ENCODE measurements at regions of chr11 and their contacts with region 1.

Region 1: GRCh38 chr11:65711785-65712632 is at the start of gene KAT5:
- DNase-seq: peak; percentile 99
- ATAC-seq: peak; percentile 89
- H3K4me3 ChIP-seq: peak within 1 kb of the TSS; percentile 70
- H3K27ac ChIP-seq: peak within 1 kb of the TSS; percentile 91
- H3K4me1 ChIP-seq: peaks cover 11% of the 10 kb centered on the region
- H3K27me3 ChIP-seq: no peaks in the 10 kb centered on the region
- CTCF ChIP-seq: peak; percentile 95
- total RNA-seq, gene KAT5: 74.9 and 83.9 TPM in 2 replicates

Region 2: GRCh38 chr11:65773784-65774411 is 61.9 kb after region 1 on chr11:
- CTCF ChIA-PET with region 1: interaction called, 3 read pairs
- POLR2A ChIA-PET with region 1: no interaction called
- intact Hi-C with region 1: loop called (anchors 2 kb)
- DNase-seq: no peak
- ATAC-seq: no peak
- H3K4me3 ChIP-seq: no peak overlapping the region
- H3K27ac ChIP-seq: no peak overlapping the region
- H3K4me1 ChIP-seq: peaks cover 11% of the 10 kb centered on the region
- H3K27me3 ChIP-seq: no peaks in the 10 kb centered on the region
- CTCF ChIP-seq: no peak

Region 3: GRCh38 chr11:65779851-65780577 is 68.0 kb after region 1 on chr11:
- CTCF ChIA-PET with region 1: interaction called, 17 read pairs
- POLR2A ChIA-PET with region 1: interaction called, 5 read pairs
- intact Hi-C with region 1: no loop called
- DNase-seq: peak; percentile 91
- ATAC-seq: peak; percentile 83
- H3K4me3 ChIP-seq: peak overlapping the region; percentile 84
- H3K27ac ChIP-seq: peak overlapping the region; percentile 44
- H3K4me1 ChIP-seq: peaks cover 23% of the 10 kb centered on the region
- H3K27me3 ChIP-seq: no peaks in the 10 kb centered on the region
- CTCF ChIP-seq: peak; percentile 99

Region 4: GRCh38 chr11:65802841-65803240 is 90.8 kb after region 1 on chr11:
- CTCF ChIA-PET with region 1: no interaction called
- POLR2A ChIA-PET with region 1: no interaction called
- intact Hi-C with region 1: no loop called
- DNase-seq: no peak
- ATAC-seq: no peak
- H3K4me3 ChIP-seq: no peak overlapping the region
- H3K27ac ChIP-seq: no peak overlapping the region
- H3K4me1 ChIP-seq: no peaks in the 10 kb centered on the region
- H3K27me3 ChIP-seq: no peaks in the 10 kb centered on the region
- CTCF ChIP-seq: no peak

Region 5: GRCh38 chr11:65817835-65818742 is 106.1 kb after region 1 on chr11:
- CTCF ChIA-PET with region 1: interaction called, 8 read pairs
- POLR2A ChIA-PET with region 1: interaction called, 3 read pairs
- intact Hi-C with region 1: loop called (anchors 1 kb)
- DNase-seq: peak; percentile 94
- ATAC-seq: peak; percentile 85
- H3K4me3 ChIP-seq: peak overlapping the region; percentile 77
- H3K27ac ChIP-seq: peak overlapping the region; percentile 52
- H3K4me1 ChIP-seq: peaks cover 4% of the 10 kb centered on the region; the same call in 1 of the 2 replicates
- H3K27me3 ChIP-seq: no peaks in the 10 kb centered on the region
- CTCF ChIP-seq: peak; percentile 98

Region 6: DNA sequence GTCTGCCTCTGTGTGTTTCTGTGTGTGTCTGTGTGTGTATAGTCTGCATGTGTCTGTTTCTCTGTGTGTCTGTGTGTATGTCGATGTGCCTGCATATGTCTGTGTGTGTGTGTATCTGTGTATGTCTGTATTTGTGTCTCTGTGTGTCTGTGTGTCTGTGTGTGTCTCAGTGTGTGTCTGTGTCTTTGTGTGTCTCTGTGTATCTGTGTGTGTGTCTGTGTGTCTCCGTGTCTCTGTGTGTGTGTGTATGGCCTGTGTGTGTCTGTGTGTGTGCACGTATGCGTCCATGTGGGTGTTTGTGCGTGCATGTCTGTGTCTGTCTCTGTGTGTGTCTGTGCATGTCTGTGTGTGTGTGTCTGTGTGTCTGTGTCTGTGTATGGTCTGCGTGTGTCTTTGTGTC is 122.2 kb after region 1 on chr11:
- CTCF ChIA-PET with region 1: no interaction called
- POLR2A ChIA-PET with region 1: no interaction called
- intact Hi-C with region 1: no loop called
- DNase-seq: no peak
- ATAC-seq: peak; percentile 12; the same call in 1 of the 2 replicates
- H3K4me3 ChIP-seq: peak overlapping the region; percentile 43; the same call in 1 of the 2 replicates
- H3K27ac ChIP-seq: no peak overlapping the region
- H3K4me1 ChIP-seq: no peaks in the 10 kb centered on the region
- H3K27me3 ChIP-seq: peaks cover 20% of the 10 kb centered on the region; the same call in 1 of the 2 replicates
- CTCF ChIP-seq: no peak

Region 7: DNA sequence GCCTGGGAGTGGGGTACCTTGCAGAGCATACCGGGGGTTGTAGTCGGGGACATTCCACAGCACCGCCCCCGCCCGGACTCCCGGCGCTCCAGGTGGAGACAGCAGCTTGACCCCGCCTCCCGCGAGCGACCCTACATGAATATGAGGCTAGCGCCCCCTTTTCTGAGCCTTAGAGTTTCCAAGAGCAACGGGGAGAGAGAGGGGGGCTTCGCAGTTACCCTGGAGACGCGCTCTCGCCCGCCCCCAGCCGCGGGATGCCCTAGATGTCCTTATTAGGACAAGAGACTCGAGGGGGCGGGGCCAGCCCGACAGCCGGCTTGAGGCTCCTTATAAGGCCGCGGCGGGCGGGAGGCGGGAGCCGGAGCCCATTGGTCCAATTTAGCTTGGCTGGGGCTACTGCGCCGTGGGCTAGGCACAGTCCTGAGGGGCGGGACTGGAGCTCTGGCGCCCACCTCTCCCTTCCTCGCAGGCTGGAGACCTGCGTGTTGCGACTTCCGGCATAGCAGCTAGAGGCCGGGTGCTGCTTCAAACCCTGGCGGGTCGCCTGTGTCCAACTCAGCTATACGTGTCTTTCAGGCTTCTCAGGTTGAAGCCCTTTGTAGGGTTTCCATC is 147.3 kb after region 1 on chr11:
- CTCF ChIA-PET with region 1: interaction called, 9 read pairs
- POLR2A ChIA-PET with region 1: interaction called, 6 read pairs
- intact Hi-C with region 1: loop called (anchors 1 kb)
- DNase-seq: peak; percentile 99
- ATAC-seq: peak; percentile 63
- H3K4me3 ChIP-seq: peak overlapping the region; percentile 79
- H3K27ac ChIP-seq: peak overlapping the region; percentile 74
- H3K4me1 ChIP-seq: peaks cover 41% of the 10 kb centered on the region
- H3K27me3 ChIP-seq: no peaks in the 10 kb centered on the region
- CTCF ChIP-seq: no peak

Region 8: GRCh38 chr11:65988791-65989592 is 277.0 kb after region 1 on chr11:
- CTCF ChIA-PET with region 1: no interaction called
- POLR2A ChIA-PET with region 1: no interaction called
- intact Hi-C with region 1: loop called (anchors 10 kb)
- DNase-seq: peak; percentile 98
- ATAC-seq: peak; percentile 97
- H3K4me3 ChIP-seq: no peak overlapping the region
- H3K27ac ChIP-seq: no peak overlapping the region
- H3K4me1 ChIP-seq: no peaks in the 10 kb centered on the region
- H3K27me3 ChIP-seq: no peaks in the 10 kb centered on the region
- CTCF ChIP-seq: peak; percentile 99

Measured in PC-3 (cell line).